ENCODE measurements at regions of chr6 and their contacts with region 1.

Region 1: GRCh38 chr6:33585403-33586107 is 5.5 kb upstream of the BAK1 start:
- DNase-seq: peak; percentile 73 to 94 (median 80)
- ATAC-seq: peak; percentile 97
- H3K4me3 ChIP-seq: peak overlapping the region; percentile 10
- H3K4me3 Mint-ChIP-seq: peak overlapping the region in 8 of 10 donors; percentile 16 to 84 (median 51)
- H3K27ac ChIP-seq: peak overlapping the region; percentile 58
- H3K27ac Mint-ChIP-seq: peak overlapping the region; percentile 76 to 96 (median 91)
- H3K4me1 ChIP-seq: peaks cover 10 to 11% of the 10 kb centered on the region in 2 donors
- H3K4me1 Mint-ChIP-seq: peaks cover 0 to 21% (median 17%) of the 10 kb centered on the region in 7 donors
- H3K27me3 ChIP-seq: no peaks in the 10 kb centered on the region
- H3K27me3 Mint-ChIP-seq: no peaks in the 10 kb centered on the region

Region 2: DNA sequence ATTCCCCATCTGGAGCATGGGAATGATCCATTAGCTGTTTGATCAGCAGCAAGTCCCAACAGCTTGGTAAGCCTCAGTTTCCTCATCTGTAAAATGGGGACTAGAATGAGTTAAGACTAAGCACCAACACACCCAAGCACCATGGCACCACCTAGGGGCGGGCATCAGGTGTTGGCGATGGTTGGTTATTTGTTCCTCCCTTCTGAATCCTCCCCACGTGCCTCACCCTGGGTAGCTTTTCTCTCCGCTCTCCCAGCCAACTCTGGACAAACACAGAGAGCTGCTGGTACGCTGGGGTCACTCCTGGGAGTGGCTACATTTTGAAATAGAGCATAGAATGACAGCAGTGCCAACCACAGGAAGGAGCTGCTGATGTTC is 22.2 kb after region 1 on chr6:
- CTCF ChIA-PET with region 1: interaction called, 8 read pairs
- POLR2A ChIA-PET with region 1: no interaction called
- intact Hi-C with region 1: loop called in 1 of 2 experiments (anchors 2 kb)
- DNase-seq: peak in 1 of 9 donors; percentile 42
- ATAC-seq: peak; percentile 55
- H3K4me3 ChIP-seq: no peak overlapping the region
- H3K4me3 Mint-ChIP-seq: no peak overlapping the region
- H3K27ac ChIP-seq: no peak overlapping the region
- H3K27ac Mint-ChIP-seq: no peak overlapping the region
- H3K4me1 ChIP-seq: no peaks in the 10 kb centered on the region
- H3K4me1 Mint-ChIP-seq: peaks cover 0 to 4% (median 0%) of the 10 kb centered on the region in 7 donors
- H3K27me3 ChIP-seq: no peaks in the 10 kb centered on the region
- H3K27me3 Mint-ChIP-seq: peaks cover 0 to 17% (median 0%) of the 10 kb centered on the region in 5 donors

Region 3: DNA sequence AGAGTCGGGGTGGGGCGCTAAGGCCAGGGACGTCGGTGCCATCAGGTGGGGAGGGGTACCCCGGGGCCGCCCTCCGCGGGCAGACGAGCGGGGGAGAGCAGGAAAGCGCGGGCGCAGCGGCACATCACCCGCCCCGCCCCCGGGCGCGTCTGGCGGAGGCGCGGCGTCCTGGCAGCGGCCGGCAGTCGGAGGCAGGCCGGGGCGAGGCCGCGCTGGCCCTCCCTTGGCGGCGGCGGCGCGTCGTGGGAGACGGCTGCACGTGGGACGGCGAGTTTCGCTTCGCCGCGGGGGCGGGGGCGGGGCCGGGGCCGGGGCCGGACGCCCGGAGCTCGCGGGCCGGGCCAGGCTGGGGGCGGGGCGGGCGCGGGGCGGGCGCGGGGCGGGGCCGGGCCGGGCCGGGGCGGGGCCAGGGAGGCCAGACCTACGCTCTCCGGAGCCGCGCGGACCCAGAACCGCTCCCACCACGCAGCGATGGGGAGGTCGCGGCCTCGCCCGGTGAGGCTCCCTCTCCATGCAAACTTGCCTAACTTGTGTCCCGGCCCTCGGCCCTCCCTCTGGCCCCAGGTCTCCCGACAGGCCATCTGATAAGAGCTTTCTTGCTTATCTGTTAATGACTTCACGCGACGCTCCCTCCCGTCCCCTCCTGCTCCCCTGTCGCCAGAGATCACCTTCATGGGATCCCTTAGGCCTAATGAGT is 48.1 kb after region 1 on chr6:
- CTCF ChIA-PET with region 1: interaction called, 5 read pairs
- POLR2A ChIA-PET with region 1: no interaction called
- intact Hi-C with region 1: loop called (anchors 1 to 2 kb)
- DNase-seq: peak; percentile 30 to 77 (median 46)
- ATAC-seq: peak; percentile 88
- H3K4me3 ChIP-seq: peak overlapping the region; percentile 43
- H3K4me3 Mint-ChIP-seq: peak overlapping the region; percentile 87 to 94 (median 89)
- H3K27ac ChIP-seq: peak overlapping the region; percentile 56
- H3K27ac Mint-ChIP-seq: peak overlapping the region; percentile 46 to 89 (median 73)
- H3K4me1 ChIP-seq: peaks cover 20 to 32% of the 10 kb centered on the region in 2 donors
- H3K4me1 Mint-ChIP-seq: peaks cover 47 to 79% (median 70%) of the 10 kb centered on the region in 7 donors
- H3K27me3 ChIP-seq: no peaks in the 10 kb centered on the region
- H3K27me3 Mint-ChIP-seq: peaks cover 0 to 3% (median 0%) of the 10 kb centered on the region in 5 donors

Region 4: GRCh38 chr6:33744001-33744848 is 158.7 kb after region 1 on chr6:
- CTCF ChIA-PET with region 1: no interaction called
- POLR2A ChIA-PET with region 1: interaction called, 3 read pairs
- intact Hi-C with region 1: loop called in 1 of 2 experiments (anchors 1 kb)
- DNase-seq: peak; percentile 47 to 71 (median 65)
- ATAC-seq: peak; percentile 87
- H3K4me3 ChIP-seq: no peak overlapping the region
- H3K4me3 Mint-ChIP-seq: no peak overlapping the region
- H3K27ac ChIP-seq: no peak overlapping the region
- H3K27ac Mint-ChIP-seq: no peak overlapping the region
- H3K4me1 ChIP-seq: no peaks in the 10 kb centered on the region
- H3K4me1 Mint-ChIP-seq: peaks cover 0 to 5% (median 4%) of the 10 kb centered on the region in 7 donors
- H3K27me3 ChIP-seq: no peaks in the 10 kb centered on the region
- H3K27me3 Mint-ChIP-seq: peaks cover 4 to 23% (median 12%) of the 10 kb centered on the region in 5 donors

Region 5: GRCh38 chr6:33875141-33875581 is 289.6 kb after region 1 on chr6:
- CTCF ChIA-PET with region 1: no interaction called
- POLR2A ChIA-PET with region 1: no interaction called
- intact Hi-C with region 1: no loop called
- DNase-seq: no peak
- ATAC-seq: no peak
- H3K4me3 ChIP-seq: no peak overlapping the region
- H3K4me3 Mint-ChIP-seq: peak overlapping the region in 3 of 10 donors; percentile 4 to 35 (median 17)
- H3K27ac ChIP-seq: no peak overlapping the region
- H3K27ac Mint-ChIP-seq: peak overlapping the region in 4 of 9 donors; percentile 26 to 87 (median 56)
- H3K4me1 ChIP-seq: no peaks in the 10 kb centered on the region
- H3K4me1 Mint-ChIP-seq: peaks cover 8 to 27% (median 13%) of the 10 kb centered on the region in 7 donors
- H3K27me3 ChIP-seq: no peaks in the 10 kb centered on the region
- H3K27me3 Mint-ChIP-seq: peaks cover 0 to 19% (median 0%) of the 10 kb centered on the region in 5 donors

Region 6: GRCh38 chr6:33950472-33950881 is 364.9 kb after region 1 on chr6:
- CTCF ChIA-PET with region 1: no interaction called
- POLR2A ChIA-PET with region 1: no interaction called
- intact Hi-C with region 1: no loop called
- DNase-seq: no peak
- ATAC-seq: no peak
- H3K4me3 ChIP-seq: no peak overlapping the region
- H3K4me3 Mint-ChIP-seq: no peak overlapping the region
- H3K27ac ChIP-seq: no peak overlapping the region
- H3K27ac Mint-ChIP-seq: no peak overlapping the region
- H3K4me1 ChIP-seq: no peaks in the 10 kb centered on the region
- H3K4me1 Mint-ChIP-seq: peaks cover 0 to 5% (median 4%) of the 10 kb centered on the region in 7 donors
- H3K27me3 ChIP-seq: no peaks in the 10 kb centered on the region
- H3K27me3 Mint-ChIP-seq: peaks cover 0 to 8% (median 0%) of the 10 kb centered on the region in 5 donors

Region 7: GRCh38 chr6:33983105-33983716 is 397.7 kb after region 1 on chr6:
- CTCF ChIA-PET with region 1: no interaction called
- POLR2A ChIA-PET with region 1: no interaction called
- intact Hi-C with region 1: no loop called
- DNase-seq: peak in 1 of 9 donors; percentile 1
- ATAC-seq: peak; percentile 27
- H3K4me3 ChIP-seq: no peak overlapping the region
- H3K4me3 Mint-ChIP-seq: no peak overlapping the region
- H3K27ac ChIP-seq: no peak overlapping the region
- H3K27ac Mint-ChIP-seq: no peak overlapping the region
- H3K4me1 ChIP-seq: no peaks in the 10 kb centered on the region
- H3K4me1 Mint-ChIP-seq: peaks cover 0 to 10% (median 4%) of the 10 kb centered on the region in 7 donors
- H3K27me3 ChIP-seq: no peaks in the 10 kb centered on the region
- H3K27me3 Mint-ChIP-seq: peaks cover 0 to 5% (median 0%) of the 10 kb centered on the region in 5 donors

Region 8: DNA sequence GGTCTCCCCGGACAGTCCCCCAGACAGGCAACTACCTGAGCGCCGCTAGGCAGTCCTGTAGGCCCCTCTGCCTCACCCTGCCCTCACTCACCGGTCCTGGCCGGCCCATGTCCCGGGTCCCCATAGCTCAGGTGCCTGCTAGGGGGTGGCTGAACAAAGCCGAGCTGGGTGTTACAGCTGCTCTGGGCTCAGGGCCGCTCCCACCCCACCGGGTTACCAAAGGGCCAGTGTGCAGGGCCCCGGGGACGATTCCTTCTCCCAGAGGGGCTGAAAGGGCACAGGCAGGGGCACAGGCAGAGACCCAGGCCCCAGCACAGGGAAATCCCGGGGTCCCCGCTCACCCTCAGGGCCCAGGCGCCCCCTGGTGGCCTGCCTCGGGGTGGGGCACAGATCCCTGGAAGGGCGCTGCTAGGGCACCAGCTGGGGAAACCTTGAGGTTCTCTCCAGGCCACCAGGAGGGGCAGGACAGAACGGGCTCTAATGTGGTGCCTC is 441.9 kb after region 1 on chr6:
- CTCF ChIA-PET with region 1: no interaction called
- POLR2A ChIA-PET with region 1: no interaction called
- intact Hi-C with region 1: loop called in 1 of 2 experiments (anchors 1 kb)
- DNase-seq: peak; percentile 36 to 78 (median 64)
- ATAC-seq: peak; percentile 66
- H3K4me3 ChIP-seq: no peak overlapping the region
- H3K4me3 Mint-ChIP-seq: no peak overlapping the region
- H3K27ac ChIP-seq: no peak overlapping the region
- H3K27ac Mint-ChIP-seq: no peak overlapping the region
- H3K4me1 ChIP-seq: no peaks in the 10 kb centered on the region
- H3K4me1 Mint-ChIP-seq: peaks cover 0 to 4% (median 0%) of the 10 kb centered on the region in 7 donors
- H3K27me3 ChIP-seq: no peaks in the 10 kb centered on the region
- H3K27me3 Mint-ChIP-seq: peaks cover 0 to 4% (median 0%) of the 10 kb centered on the region in 5 donors

Measured in naive thymus-derived CD4-positive, alpha-beta T cell (primary cell).